ENCODE measurements at regions of chr12 and their contacts with region 1.

Region 1: DNA sequence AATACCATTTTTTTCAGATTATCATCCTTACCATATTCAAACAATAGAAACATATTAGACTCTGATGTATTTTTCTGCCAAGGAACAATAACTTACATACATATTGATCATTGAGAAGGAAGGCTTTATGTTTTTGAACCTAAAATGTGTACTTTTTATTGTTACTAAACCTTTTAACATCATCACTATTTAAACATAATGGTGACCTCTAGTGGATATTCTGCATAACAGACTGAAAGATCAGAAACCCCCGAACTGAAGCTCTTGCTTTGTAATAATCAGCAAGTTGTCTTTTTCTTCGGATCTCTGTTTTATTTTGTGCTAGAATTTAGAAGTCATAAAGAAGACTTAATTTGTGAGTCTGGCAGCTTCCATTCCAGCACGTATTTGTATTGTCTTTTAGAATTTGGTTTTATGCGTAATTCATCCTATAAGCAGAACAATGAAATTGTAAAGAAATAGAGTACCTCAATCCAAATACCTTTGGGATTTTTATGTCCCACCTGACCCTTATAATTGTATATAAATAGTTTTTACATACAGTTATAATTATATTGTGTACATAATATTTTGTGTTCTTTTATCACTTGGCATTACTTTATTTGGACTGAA is 125.9 kb upstream of the ATF1 start:
- DNase-seq: peak; percentile 36
- H3K4me3 Mint-ChIP-seq: no peak overlapping the region
- H3K27ac Mint-ChIP-seq: no peak overlapping the region
- H3K4me1 Mint-ChIP-seq: peaks cover 18% of the 10 kb centered on the region
- H3K27me3 Mint-ChIP-seq: no peaks in the 10 kb centered on the region
- CTCF ChIP-seq: peak; percentile 40

Region 2: DNA sequence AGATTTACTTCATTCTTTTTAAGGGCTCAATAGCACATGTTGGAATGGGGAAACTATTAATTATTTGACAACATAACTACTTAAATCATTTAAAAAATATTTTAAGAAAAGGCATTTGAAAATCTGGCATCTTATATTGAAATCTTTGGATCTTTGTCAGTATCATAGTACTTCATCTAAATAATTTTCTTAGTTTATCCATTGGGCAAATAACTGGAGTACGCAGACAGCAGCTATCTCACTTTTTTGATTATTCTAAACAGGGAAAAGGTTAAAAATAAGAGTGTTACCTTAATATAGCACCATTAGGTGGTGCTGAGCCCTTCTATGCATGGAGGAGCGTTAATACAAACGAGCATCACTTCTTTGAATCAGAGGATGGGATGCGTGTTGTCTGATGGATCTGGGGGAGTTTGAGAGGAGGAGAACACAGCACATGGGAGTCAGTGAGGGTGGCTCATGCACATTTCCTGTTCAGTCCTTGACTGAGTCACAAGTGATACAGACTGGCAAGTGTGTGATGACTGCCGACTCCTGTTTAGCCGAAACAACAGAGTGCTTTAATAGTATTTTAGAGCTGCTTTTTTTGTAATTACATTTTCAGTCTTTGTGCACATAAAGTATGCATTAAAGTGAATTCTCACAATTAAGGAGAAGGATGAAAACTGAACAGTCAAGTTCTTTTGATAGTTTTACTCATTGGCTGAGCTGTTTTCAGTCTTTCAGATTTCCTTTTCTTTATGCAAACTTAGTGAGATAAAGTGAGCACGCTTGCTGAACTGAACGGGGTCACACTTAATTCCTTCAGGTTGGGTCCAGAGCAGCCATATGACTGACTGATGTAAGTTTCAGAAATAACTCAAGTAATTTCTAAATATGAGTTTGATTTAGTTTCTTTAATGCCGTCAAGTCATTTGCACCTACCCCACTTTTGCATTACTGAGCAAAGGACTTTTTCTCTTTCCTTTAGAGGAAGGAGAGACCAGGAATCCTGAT is 40.5 kb before region 1 on chr12:
- CTCF ChIA-PET with region 1: interaction called, 5 read pairs
- POLR2A ChIA-PET with region 1: no interaction called
- intact Hi-C with region 1: loop called (anchors 1 kb)
- DNase-seq: peak; percentile 67
- H3K4me3 Mint-ChIP-seq: peak overlapping the region; percentile 24
- H3K27ac Mint-ChIP-seq: no peak overlapping the region
- H3K4me1 Mint-ChIP-seq: peaks cover 18% of the 10 kb centered on the region
- H3K27me3 Mint-ChIP-seq: no peaks in the 10 kb centered on the region
- CTCF ChIP-seq: peak; percentile 19

Region 3: GRCh38 chr12:50620109-50620977 is 17.6 kb before region 1 on chr12:
- CTCF ChIA-PET with region 1: interaction called, 10 read pairs
- POLR2A ChIA-PET with region 1: interaction called, 19 read pairs
- intact Hi-C with region 1: no loop called
- DNase-seq: peak; percentile 61
- H3K4me3 Mint-ChIP-seq: peak overlapping the region; percentile 28
- H3K27ac Mint-ChIP-seq: peak overlapping the region; percentile 61
- H3K4me1 Mint-ChIP-seq: peaks cover 56% of the 10 kb centered on the region
- H3K27me3 Mint-ChIP-seq: no peaks in the 10 kb centered on the region
- CTCF ChIP-seq: no peak